ENCODE measurements at regions of chr11 and their contacts with region 1.

Region 1: DNA sequence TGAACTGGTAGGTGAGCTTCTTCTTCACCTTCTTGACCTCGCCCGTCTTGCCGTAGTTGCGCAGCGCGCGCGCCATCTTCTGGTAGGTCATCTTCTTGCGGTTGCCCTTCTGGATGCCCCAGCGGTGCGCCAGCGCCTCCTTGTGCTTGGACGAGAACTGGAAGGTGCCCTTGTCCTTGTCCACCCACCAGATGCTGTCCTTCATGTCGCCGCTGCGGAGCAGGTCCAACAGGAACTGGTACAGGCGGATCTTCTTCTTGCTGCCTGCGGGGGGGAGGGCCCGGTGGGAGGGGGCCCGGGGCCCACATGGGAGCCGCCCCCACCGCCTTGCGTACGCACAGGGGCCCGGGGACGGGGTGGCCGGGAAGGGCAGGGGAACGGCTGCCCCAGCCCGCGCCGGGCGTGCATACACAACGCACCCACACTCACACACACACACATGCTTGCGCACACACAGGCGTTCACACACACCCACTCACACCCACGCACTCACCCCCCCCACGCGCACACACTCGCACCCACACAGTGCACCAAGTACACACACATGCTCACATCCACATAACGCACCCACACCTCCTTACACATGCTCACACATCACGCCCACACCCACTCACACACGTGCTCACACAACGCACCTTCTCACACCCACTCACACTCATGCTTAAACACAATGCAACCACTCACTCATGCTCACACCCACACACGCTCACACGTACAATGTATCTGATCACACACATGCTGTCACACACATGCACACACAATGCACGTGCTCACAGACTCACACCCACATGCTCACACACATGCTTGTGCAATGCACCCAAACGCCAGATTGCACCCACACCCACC is 3.0 kb upstream of the MYBPC3 start:
- DNase-seq: peak; percentile 88 to 99
- H3K4me3 ChIP-seq: peak overlapping the region; percentile 30; the same call in 1 of the 2 replicates
- H3K27ac ChIP-seq: no peak overlapping the region
- H3K4me1 ChIP-seq: no peaks in the 10 kb centered on the region
- H3K27me3 ChIP-seq: no peaks in the 10 kb centered on the region
- CTCF ChIP-seq: peak; percentile 98

Region 2: GRCh38 chr11:46367244-46367915 is 988.1 kb before region 1 on chr11:
- CTCF ChIA-PET with region 1: no interaction called
- POLR2A ChIA-PET with region 1: no interaction called
- intact Hi-C with region 1: loop called (anchors 5 kb)
- DNase-seq: peak in 1 of 2 experiments; percentile 67
- H3K4me3 ChIP-seq: no peak overlapping the region
- H3K27ac ChIP-seq: no peak overlapping the region
- H3K4me1 ChIP-seq: peaks cover 20% of the 10 kb centered on the region
- H3K27me3 ChIP-seq: no peaks in the 10 kb centered on the region
- CTCF ChIP-seq: peak; percentile 88

Region 3: DNA sequence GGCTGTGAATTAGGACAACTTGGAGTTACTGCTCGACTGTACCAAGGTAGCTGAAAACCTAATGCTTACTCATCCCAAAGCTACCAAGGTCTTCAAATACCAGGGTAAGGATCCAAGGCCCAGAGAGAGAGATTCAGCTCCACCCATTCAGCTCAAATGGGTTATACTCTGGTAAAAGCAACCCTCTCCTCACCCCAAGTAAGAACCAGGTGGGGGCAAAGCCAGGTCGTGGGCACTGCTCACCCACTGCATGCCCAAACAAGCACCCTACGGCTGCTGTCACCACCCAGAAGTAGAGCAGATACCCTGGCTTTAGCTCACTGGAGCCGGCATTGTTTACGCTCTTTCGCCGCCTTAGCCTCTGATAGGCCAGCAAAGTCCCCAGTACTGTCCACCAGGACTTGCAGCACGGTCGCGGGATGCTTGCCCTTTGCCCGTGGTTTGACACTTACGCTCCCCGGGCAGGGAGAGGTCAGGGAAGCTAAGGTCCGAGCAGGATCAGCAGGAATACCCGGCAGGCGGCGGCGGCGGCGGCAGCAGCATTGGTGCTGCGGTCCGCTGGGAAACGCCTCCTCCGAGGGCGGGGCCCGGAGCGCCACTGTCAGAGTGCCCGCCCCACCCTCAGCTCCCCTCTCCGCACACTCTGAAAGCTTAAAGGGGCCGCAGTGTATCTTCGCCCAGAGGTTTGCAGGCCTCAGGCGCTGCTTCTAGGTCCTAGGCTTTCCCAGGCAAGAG is 529.0 kb before region 1 on chr11:
- CTCF ChIA-PET with region 1: no interaction called
- POLR2A ChIA-PET with region 1: no interaction called
- intact Hi-C with region 1: loop called (anchors 5 kb)
- DNase-seq: peak; percentile 61 to 85
- H3K4me3 ChIP-seq: peak overlapping the region; percentile 45
- H3K27ac ChIP-seq: no peak overlapping the region
- H3K4me1 ChIP-seq: no peaks in the 10 kb centered on the region
- H3K27me3 ChIP-seq: no peaks in the 10 kb centered on the region
- CTCF ChIP-seq: no peak

Region 4: DNA sequence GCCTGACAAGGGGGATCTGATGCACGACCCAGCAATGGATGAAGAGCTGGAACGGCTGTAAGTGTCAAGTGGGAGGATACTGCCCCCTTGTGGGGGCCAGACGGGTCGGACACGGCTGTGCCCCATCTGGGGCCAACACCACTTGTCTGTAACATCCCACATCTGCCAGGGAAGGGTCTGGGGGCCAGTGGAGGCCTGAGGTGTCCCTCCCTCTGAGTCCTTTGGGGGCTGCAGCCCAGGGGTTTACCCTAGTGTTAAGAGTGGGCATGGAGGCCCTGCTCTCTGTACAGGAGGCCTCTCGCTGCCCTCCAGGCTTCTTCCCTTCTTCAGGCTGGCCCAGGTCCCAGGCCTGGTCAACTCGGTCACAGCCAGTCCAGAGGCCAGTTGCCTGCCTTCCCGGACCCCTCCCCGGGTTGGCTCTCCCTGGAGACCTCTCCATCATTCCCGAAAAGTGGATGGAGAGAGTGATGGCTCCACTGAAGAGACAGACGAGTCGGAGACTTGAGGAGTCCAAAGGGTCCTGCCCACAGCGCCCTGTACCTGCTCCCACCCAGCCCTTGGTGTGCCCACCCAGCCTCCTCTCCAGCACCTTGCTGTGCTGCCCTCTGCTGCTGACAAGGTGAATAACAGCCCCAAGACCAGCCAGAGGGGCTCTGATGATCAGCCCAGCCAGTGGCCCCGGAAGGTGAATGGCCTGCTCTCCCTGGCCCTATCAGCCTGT is 194.2 kb before region 1 on chr11:
- CTCF ChIA-PET with region 1: no interaction called
- POLR2A ChIA-PET with region 1: no interaction called
- intact Hi-C with region 1: loop called (anchors 1 kb)
- DNase-seq: peak; percentile 51 to 64
- H3K4me3 ChIP-seq: no peak overlapping the region
- H3K27ac ChIP-seq: no peak overlapping the region
- H3K4me1 ChIP-seq: no peaks in the 10 kb centered on the region
- H3K27me3 ChIP-seq: no peaks in the 10 kb centered on the region
- CTCF ChIP-seq: peak; percentile 75

Region 5: DNA sequence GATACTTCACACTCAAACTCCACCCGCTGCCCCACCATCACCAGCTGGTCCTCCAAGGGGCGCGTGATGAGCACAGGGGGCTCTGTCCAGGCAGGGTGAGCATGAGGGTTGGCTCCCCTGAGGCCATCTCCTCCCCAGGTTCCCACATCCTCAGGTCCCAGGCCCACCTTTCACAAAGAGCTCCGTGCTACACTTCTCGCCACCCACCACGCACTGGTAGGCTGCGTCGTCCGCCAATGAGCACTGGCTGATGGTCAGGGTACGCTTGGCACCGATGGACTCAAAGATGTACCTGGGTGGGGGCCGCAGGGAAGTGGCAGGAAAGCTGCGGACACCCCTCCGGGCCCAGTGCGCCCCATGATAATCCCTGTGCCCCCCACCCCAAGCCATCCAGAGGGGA is 12.7 kb before region 1 on chr11:
- CTCF ChIA-PET with region 1: interaction called, 15 read pairs
- POLR2A ChIA-PET with region 1: no interaction called
- intact Hi-C with region 1: no loop called
- DNase-seq: no peak
- H3K4me3 ChIP-seq: no peak overlapping the region
- H3K27ac ChIP-seq: no peak overlapping the region
- H3K4me1 ChIP-seq: no peaks in the 10 kb centered on the region
- H3K27me3 ChIP-seq: peaks cover 33% of the 10 kb centered on the region
- CTCF ChIP-seq: no peak

Region 6: DNA sequence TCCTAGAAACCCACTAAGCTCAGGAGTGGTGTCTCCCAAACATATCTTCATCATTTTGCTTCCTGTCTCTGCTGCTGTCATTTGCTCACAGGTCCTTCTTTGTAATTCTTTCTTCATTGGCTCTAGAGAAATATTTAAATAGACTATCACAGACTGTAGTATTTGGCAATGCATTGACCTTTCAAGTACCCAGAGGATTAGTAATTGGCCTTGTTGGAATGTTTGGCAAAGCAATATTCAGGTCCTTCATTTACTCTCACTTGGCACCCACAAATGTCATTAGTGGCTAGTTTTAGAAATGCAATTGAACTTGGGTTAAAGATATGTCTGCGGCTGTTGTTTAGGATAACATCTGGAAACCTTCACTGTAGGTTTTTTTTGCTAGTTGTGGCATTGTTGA is 999.2 kb after region 1 on chr11:
- CTCF ChIA-PET with region 1: no interaction called
- POLR2A ChIA-PET with region 1: no interaction called
- intact Hi-C with region 1: no loop called
- DNase-seq: no peak
- H3K4me3 ChIP-seq: no peak overlapping the region
- H3K27ac ChIP-seq: no peak overlapping the region
- H3K4me1 ChIP-seq: no peaks in the 10 kb centered on the region
- H3K27me3 ChIP-seq: no peaks in the 10 kb centered on the region
- CTCF ChIP-seq: no peak